H1 (cell line): ENCODE measurements at regions of chrX and their contacts with region 1.

Region 1: DNA sequence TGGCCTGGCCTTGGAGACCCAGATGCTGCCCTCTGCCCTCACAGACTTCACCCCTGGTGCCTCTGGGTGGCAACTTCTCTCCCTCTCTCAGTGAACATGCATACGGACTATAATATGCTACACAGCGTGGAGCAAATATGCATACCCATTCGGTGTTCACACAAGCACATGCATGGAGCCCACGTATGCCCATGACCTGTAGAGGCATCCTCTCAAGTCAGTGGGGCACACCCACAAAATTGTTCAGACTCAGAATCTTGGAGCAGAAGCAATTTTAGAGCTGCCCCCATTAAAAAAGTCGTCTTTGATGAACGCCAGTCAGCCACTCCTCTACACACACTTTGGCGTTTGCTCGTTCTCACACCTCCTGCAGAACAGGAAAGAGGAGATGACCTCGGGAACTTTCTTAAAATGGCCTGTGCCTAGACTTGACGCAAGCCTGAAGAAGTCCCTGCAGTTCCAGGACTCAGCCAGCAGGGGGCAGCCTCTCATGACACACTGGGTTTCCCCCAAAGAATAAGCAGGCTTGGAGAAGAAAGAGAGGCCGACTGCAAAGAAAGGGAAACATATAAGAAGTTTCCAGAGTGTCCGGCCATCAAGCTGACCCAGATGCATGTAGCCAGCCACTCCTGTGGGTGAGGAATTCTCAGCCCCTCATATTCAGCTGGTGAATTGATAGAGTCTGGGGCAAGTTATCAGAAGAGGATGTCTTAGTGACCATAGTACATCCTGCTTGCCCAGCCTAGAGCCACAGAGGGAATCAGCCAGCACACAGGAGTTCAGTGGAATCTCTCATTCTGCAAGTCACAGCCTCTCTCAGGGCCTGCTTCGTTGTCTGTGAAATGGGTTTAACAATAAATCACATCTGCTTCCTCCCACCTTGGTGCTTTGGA is 17.3 kb downstream of the APLN start:
- DNase-seq: peak; percentile 43 to 85
- H3K4me3 ChIP-seq: no peak overlapping the region
- H3K27ac ChIP-seq: no peak overlapping the region
- H3K4me1 ChIP-seq: no peaks in the 10 kb centered on the region
- H3K27me3 ChIP-seq: no peaks in the 10 kb centered on the region; a peak in 2 of 7 replicates
- CTCF ChIP-seq: peak; percentile 67 to 76 (median 74)
- EP300 ChIP-seq: no peak
- POLR2A ChIP-seq: no peak
- RAD21 ChIP-seq: peak; percentile 72 to 81

Region 2: GRCh38 chrX:129606918-129607317 is 30.5 kb before region 1 on chrX:
- CTCF ChIA-PET with region 1: interaction called, 31 read pairs
- POLR2A ChIA-PET with region 1: no interaction called
- DNase-seq: peak in 1 of 2 experiments; percentile 72
- H3K4me3 ChIP-seq: no peak overlapping the region
- H3K27ac ChIP-seq: no peak overlapping the region
- H3K4me1 ChIP-seq: no peaks in the 10 kb centered on the region; a peak in 2 of 7 replicates
- H3K27me3 ChIP-seq: 0 out of 7 replicates have a peak, but pooled peaks cover 0 to 2% (median 0%) of the 10 kb centered on the region in 4 experiments
- CTCF ChIP-seq: peak; percentile 12 to 67 (median 65)
- EP300 ChIP-seq: no peak
- POLR2A ChIP-seq: no peak
- RAD21 ChIP-seq: peak; percentile 78 to 85

Region 3: GRCh38 chrX:129654419-129655165 is 17.1 kb after region 1 on chrX and contains the start of gene APLN:
- CTCF ChIA-PET with region 1: interaction called, 36 read pairs
- POLR2A ChIA-PET with region 1: interaction called, 3 read pairs
- DNase-seq: peak in 1 of 2 experiments; percentile 50
- H3K4me3 ChIP-seq: peak within 1 kb of the TSS; percentile 27 to 64 (median 45)
- H3K27ac ChIP-seq: no peak within 1 kb of the TSS
- H3K4me1 ChIP-seq: peaks cover 3 to 12% (median 6%) of the 10 kb centered on the region in 4 experiments; a peak in 6 of 7 replicates
- H3K27me3 ChIP-seq: peaks cover 14 to 62% (median 43%) of the 10 kb centered on the region in 4 experiments
- CTCF ChIP-seq: no peak
- EP300 ChIP-seq: no peak
- POLR2A ChIP-seq: no peak
- RAD21 ChIP-seq: no peak
- total RNA-seq, gene APLN: 1.1 TPM in 2 replicates

Region 4: GRCh38 chrX:129697204-129697829 is 59.9 kb after region 1 on chrX:
- CTCF ChIA-PET with region 1: interaction called, 14 read pairs
- POLR2A ChIA-PET with region 1: no interaction called
- DNase-seq: no peak
- H3K4me3 ChIP-seq: peak overlapping the region in 1 of 4 experiments; percentile 32; a peak in 1 of 8 replicates
- H3K27ac ChIP-seq: no peak overlapping the region
- H3K4me1 ChIP-seq: peaks cover 0 to 16% (median 8%) of the 10 kb centered on the region in 4 experiments; a peak in 5 of 7 replicates
- H3K27me3 ChIP-seq: no peaks in the 10 kb centered on the region
- CTCF ChIP-seq: no peak
- EP300 ChIP-seq: no peak
- POLR2A ChIP-seq: no peak
- RAD21 ChIP-seq: no peak

Region 5: DNA sequence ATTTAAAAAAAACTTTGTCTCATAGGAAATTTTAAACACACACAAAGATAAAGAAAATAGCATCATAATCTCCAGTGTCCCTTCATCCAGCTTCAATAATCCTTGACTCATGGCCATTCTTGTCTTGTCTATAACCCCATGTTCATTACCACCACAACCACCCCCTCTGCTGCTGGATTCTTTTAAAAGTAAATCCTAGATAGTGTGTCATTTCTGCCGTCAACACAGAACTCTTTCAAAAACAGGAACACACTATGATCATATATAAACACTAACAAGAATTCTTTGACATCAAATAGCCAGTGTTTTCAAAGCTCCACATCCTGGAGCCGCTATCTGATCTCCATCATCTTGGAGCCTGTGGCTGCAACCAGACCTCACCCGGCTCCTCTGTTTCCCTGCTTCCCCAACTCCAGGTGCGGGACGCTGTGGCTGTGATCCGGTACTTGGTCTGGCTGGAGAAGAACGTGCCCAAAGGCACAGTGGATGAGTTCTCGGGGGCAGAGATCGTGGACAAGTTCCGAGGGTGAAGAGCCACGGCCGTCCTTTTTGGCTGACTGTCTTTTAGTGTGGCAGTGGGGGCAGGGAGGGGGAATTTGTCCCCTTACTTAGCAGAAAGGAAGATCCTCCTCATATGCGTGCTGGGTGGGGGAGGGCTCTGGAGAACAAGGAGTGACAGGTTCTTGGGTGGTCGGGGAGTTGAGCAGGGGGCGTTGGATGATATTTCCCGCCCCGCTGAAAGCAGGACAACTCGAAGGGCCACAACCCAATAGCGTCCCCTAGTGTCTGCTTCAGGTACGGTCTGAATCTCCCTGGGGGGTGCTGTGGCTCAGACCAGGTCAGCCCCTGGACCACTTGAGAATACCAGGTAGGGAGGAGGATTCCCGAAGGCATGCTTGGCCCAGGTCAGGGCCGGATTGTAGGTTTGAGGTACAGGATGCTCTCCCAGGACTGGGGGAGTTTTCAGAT is 116.9 kb after region 1 on chrX:
- CTCF ChIA-PET with region 1: interaction called, 19 read pairs
- POLR2A ChIA-PET with region 1: interaction called, 4 read pairs
- DNase-seq: peak in 1 of 2 experiments; percentile 81
- H3K4me3 ChIP-seq: no peak overlapping the region
- H3K27ac ChIP-seq: no peak overlapping the region
- H3K4me1 ChIP-seq: no peaks in the 10 kb centered on the region
- H3K27me3 ChIP-seq: no peaks in the 10 kb centered on the region
- CTCF ChIP-seq: peak in 2 of 3 experiments; percentile 76 to 86; a peak in 3 of 4 replicates
- EP300 ChIP-seq: no peak
- POLR2A ChIP-seq: no peak
- RAD21 ChIP-seq: peak; percentile 81